Activated naive CD4-positive, alpha-beta T cell treated with anti-CD3 and anti-CD28 coated beads, Interleukin-2, amount 10 ng/mL, durations not matched to agents 7 days and 5 days (primary cell): ENCODE measurements at regions of chr2 and their contacts with region 1.

Region 1: GRCh38 chr2:219057709-219058540 is 2.8 kb downstream of the IHH start:
- DNase-seq: peak; percentile 81
- H3K4me3 Mint-ChIP-seq: no peak overlapping the region
- H3K27ac Mint-ChIP-seq: peak overlapping the region; percentile 24
- H3K4me1 Mint-ChIP-seq: peaks cover 22% of the 10 kb centered on the region
- H3K27me3 Mint-ChIP-seq: peaks cover 98% of the 10 kb centered on the region

Region 2: DNA sequence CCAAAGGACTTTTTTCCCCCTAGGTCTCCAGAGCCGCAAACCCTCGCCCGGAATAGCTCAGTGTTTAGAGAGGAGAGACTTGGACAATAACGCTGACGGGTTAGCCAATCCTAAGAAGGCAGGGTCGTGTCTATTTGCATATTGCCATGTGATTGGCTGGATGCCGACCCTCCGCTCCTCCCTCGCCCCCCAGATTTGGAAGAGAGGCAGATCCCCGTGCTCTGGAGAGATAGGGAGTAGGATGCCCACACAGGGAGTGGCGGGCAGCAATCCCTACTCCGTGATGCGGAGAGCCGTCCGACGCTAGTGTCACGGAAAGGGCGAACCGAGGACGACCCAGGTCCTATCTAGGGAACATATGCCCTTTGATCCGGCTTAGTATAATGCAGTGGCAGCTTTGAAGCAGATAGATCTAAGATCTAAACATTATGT is 197.0 kb before region 1 on chr2:
- CTCF ChIA-PET with region 1: no interaction called
- DNase-seq: no peak
- H3K4me3 Mint-ChIP-seq: no peak overlapping the region
- H3K27ac Mint-ChIP-seq: no peak overlapping the region
- H3K4me1 Mint-ChIP-seq: peaks cover 12% of the 10 kb centered on the region
- H3K27me3 Mint-ChIP-seq: peaks cover 95% of the 10 kb centered on the region

Region 3: GRCh38 chr2:219041252-219041651 is 16.7 kb before region 1 on chr2 and contains the start of gene CFAP65:
- CTCF ChIA-PET with region 1: interaction called, 10 read pairs
- DNase-seq: peak; percentile 59
- H3K4me3 Mint-ChIP-seq: peak within 1 kb of the TSS; percentile 42
- H3K27ac Mint-ChIP-seq: no peak within 1 kb of the TSS
- H3K4me1 Mint-ChIP-seq: peaks cover 9% of the 10 kb centered on the region
- H3K27me3 Mint-ChIP-seq: peaks cover 59% of the 10 kb centered on the region